Naive thymus-derived CD4-positive, alpha-beta T cell (primary cell): ENCODE measurements at regions of chr6 and their contacts with region 1.

Region 1: GRCh38 chr6:63598049-63599036 is 26.1 kb downstream of the LOC128125822 start:
- DNase-seq: peak; percentile 39 to 80 (median 74)
- ATAC-seq: peak; percentile 99
- H3K4me3 ChIP-seq: peak overlapping the region; percentile 53
- H3K4me3 Mint-ChIP-seq: peak overlapping the region; percentile 73 to 93 (median 88)
- H3K27ac ChIP-seq: no peak overlapping the region
- H3K27ac Mint-ChIP-seq: peak overlapping the region in 5 of 9 donors; percentile 3 to 73 (median 52)
- H3K4me1 ChIP-seq: peaks cover 0 to 4% of the 10 kb centered on the region in 2 donors
- H3K4me1 Mint-ChIP-seq: peaks cover 7 to 20% (median 18%) of the 10 kb centered on the region in 7 donors
- H3K27me3 ChIP-seq: no peaks in the 10 kb centered on the region
- H3K27me3 Mint-ChIP-seq: peaks cover 0 to 22% (median 5%) of the 10 kb centered on the region in 5 donors

Region 2: DNA sequence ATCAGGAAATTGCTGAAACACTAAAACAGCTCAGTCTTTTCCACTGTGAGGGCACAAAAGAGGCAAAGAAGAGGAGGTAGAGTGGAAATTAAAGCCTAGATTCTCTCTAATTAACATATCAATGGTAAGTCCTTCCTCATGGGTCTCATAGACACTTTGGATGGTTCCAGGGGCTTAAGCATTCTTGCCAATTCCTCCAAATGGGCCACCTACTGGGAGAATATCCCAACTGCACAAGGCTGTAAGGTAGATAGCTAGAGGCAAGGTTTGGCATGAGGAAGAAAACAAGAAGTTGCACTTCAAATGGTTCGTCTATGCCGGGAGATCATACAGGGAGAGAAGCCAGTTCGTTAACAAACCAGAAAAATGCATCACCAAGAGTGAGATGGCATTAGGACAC is 1204.7 kb before region 1 on chr6:
- CTCF ChIA-PET with region 1: no interaction called
- POLR2A ChIA-PET with region 1: no interaction called
- intact Hi-C with region 1: no loop called
- DNase-seq: no peak
- ATAC-seq: no peak
- H3K4me3 ChIP-seq: no peak overlapping the region
- H3K4me3 Mint-ChIP-seq: no peak overlapping the region
- H3K27ac ChIP-seq: no peak overlapping the region
- H3K27ac Mint-ChIP-seq: no peak overlapping the region
- H3K4me1 ChIP-seq: no peaks in the 10 kb centered on the region
- H3K4me1 Mint-ChIP-seq: no peaks in the 10 kb centered on the region
- H3K27me3 ChIP-seq: no peaks in the 10 kb centered on the region
- H3K27me3 Mint-ChIP-seq: no peaks in the 10 kb centered on the region

Region 3: DNA sequence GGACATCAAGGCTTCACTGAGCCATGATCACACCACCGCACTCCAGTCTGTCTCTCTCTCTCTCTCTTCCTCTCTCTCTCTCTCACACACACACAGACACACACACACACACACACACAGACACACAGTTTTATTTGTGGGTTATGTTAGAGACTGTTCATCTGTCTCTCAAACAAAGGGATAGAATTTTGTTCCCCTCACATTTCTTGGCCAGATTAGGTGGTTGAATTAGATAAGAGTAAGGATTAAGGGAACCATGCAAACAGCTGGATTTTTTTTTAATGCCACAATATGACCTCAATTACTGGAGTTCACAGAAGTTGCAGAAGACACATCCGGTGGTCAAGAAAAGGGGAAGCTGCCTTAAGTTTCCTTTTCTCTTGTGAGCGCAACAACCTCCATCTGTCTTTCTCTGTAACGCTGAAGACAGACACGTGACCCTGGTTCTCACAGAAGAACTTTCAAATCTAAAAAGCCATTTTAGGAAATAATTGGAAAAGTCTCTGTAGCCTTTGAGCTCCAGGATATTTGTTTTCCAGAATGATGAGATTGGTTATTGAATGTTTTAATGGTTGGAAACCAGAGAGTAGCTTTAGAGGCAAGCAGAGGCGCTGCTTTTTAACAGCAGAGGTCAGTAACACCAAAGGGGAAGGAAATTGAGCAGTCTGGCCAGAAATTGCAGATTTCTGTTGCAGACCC is 245.6 kb before region 1 on chr6:
- CTCF ChIA-PET with region 1: no interaction called
- POLR2A ChIA-PET with region 1: no interaction called
- intact Hi-C with region 1: loop called (anchors 1 kb)
- DNase-seq: no peak
- ATAC-seq: peak; percentile 86
- H3K4me3 ChIP-seq: no peak overlapping the region
- H3K4me3 Mint-ChIP-seq: peak overlapping the region in 2 of 10 donors; percentile 22 to 66
- H3K27ac ChIP-seq: no peak overlapping the region
- H3K27ac Mint-ChIP-seq: peak overlapping the region in 2 of 9 donors; percentile 13 to 48
- H3K4me1 ChIP-seq: no peaks in the 10 kb centered on the region
- H3K4me1 Mint-ChIP-seq: peaks cover 0 to 15% (median 7%) of the 10 kb centered on the region in 7 donors
- H3K27me3 ChIP-seq: no peaks in the 10 kb centered on the region
- H3K27me3 Mint-ChIP-seq: peaks cover 10 to 27% (median 21%) of the 10 kb centered on the region in 5 donors

Region 4: GRCh38 chr6:63389191-63389844 is 209.0 kb before region 1 on chr6:
- CTCF ChIA-PET with region 1: no interaction called
- POLR2A ChIA-PET with region 1: no interaction called
- intact Hi-C with region 1: no loop called
- DNase-seq: no peak
- ATAC-seq: no peak
- H3K4me3 ChIP-seq: no peak overlapping the region
- H3K4me3 Mint-ChIP-seq: no peak overlapping the region
- H3K27ac ChIP-seq: no peak overlapping the region
- H3K27ac Mint-ChIP-seq: no peak overlapping the region
- H3K4me1 ChIP-seq: no peaks in the 10 kb centered on the region
- H3K4me1 Mint-ChIP-seq: no peaks in the 10 kb centered on the region
- H3K27me3 ChIP-seq: no peaks in the 10 kb centered on the region
- H3K27me3 Mint-ChIP-seq: peaks cover 0 to 7% (median 5%) of the 10 kb centered on the region in 5 donors

Region 5: DNA sequence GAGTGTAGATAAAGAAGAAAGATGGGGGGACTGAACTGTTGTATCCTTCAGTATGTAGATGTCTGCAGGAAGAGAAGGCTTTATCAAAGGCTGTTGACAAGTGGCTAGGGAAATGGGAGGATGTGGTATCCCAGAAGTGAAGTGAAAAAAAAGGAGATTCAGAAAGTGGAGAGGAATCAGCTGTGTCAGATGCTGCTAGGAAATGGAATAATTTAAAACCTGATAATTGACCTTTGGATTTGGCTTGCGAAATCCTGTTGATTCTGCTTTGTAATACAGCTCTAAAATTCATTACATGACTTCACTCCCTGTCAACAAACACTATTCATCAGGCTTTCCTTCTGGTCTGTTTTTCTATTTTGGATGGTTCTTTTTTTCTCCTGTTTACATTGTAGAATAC is 78.9 kb after region 1 on chr6:
- CTCF ChIA-PET with region 1: interaction called, 4 read pairs
- POLR2A ChIA-PET with region 1: interaction called, 3 read pairs
- intact Hi-C with region 1: loop called in 1 of 2 experiments (anchors 5 kb)
- DNase-seq: no peak
- ATAC-seq: no peak
- H3K4me3 ChIP-seq: no peak overlapping the region
- H3K4me3 Mint-ChIP-seq: no peak overlapping the region
- H3K27ac ChIP-seq: no peak overlapping the region
- H3K27ac Mint-ChIP-seq: no peak overlapping the region
- H3K4me1 ChIP-seq: peaks cover 5 to 40% of the 10 kb centered on the region in 2 donors
- H3K4me1 Mint-ChIP-seq: peaks cover 15 to 54% (median 38%) of the 10 kb centered on the region in 7 donors
- H3K27me3 ChIP-seq: no peaks in the 10 kb centered on the region
- H3K27me3 Mint-ChIP-seq: no peaks in the 10 kb centered on the region

Region 6: DNA sequence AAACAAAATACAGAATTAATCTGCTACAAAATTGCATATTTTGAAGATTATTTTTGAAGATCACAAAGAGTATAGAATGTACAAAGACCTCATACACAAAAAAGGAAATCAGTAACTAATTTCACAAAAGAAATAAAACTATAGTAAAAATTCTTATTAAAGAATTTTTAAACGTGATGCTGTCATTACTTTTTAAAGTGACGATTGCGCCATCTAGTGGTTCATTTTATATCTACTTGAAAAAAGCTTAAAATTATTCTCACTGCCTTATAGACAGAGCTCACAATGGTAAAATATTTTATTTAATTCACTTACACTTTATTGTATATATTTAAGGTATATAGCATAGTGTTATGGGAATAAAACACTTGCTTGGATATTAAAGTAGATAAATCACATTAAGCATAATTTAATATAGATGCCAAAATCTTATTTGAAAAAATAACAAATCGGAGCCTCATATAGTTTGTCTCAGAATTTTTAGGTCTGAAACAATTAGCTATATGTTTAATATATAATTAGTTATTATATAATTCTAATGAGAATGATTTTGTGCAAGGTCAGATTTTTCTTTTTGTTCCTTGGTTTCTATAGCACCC is 166.1 kb after region 1 on chr6:
- CTCF ChIA-PET with region 1: interaction called, 61 read pairs
- POLR2A ChIA-PET with region 1: interaction called, 4 read pairs
- intact Hi-C with region 1: loop called (anchors 1 kb)
- DNase-seq: peak in 7 of 9 donors; percentile 10 to 52 (median 49)
- ATAC-seq: peak; percentile 50
- H3K4me3 ChIP-seq: no peak overlapping the region
- H3K4me3 Mint-ChIP-seq: no peak overlapping the region
- H3K27ac ChIP-seq: no peak overlapping the region
- H3K27ac Mint-ChIP-seq: no peak overlapping the region
- H3K4me1 ChIP-seq: no peaks in the 10 kb centered on the region
- H3K4me1 Mint-ChIP-seq: no peaks in the 10 kb centered on the region
- H3K27me3 ChIP-seq: no peaks in the 10 kb centered on the region
- H3K27me3 Mint-ChIP-seq: peaks cover 0 to 17% (median 5%) of the 10 kb centered on the region in 5 donors

Region 7: DNA sequence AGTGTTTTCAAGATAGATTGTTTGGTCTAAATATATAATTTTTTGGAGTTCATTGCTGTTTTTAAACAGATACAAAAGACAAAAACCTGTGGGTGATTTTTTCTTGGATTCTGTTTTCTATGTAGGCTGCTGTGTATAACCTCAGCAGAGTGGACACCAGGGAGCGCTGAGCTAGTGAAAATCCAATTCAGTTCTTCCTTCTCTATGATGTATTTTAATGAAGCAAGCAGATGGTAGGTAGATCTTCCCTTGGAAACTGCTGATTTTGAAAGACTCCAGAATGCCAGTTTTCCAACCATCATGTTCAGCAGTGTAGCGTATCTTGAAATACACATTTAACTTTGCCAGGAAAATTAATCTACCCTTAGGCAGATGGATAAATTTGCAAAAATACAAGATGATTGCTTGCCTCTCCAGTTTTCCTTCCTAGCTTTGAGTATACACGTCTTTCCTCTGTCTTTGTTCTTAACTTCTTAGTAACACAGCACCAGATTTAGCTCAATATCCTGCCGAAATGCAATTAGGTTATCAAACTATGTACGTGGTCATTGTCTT is 215.3 kb after region 1 on chr6:
- CTCF ChIA-PET with region 1: no interaction called
- POLR2A ChIA-PET with region 1: no interaction called
- intact Hi-C with region 1: loop called in 1 of 2 experiments (anchors 1 kb)
- DNase-seq: no peak
- ATAC-seq: no peak
- H3K4me3 ChIP-seq: no peak overlapping the region
- H3K4me3 Mint-ChIP-seq: no peak overlapping the region
- H3K27ac ChIP-seq: no peak overlapping the region
- H3K27ac Mint-ChIP-seq: no peak overlapping the region
- H3K4me1 ChIP-seq: no peaks in the 10 kb centered on the region
- H3K4me1 Mint-ChIP-seq: no peaks in the 10 kb centered on the region
- H3K27me3 ChIP-seq: no peaks in the 10 kb centered on the region
- H3K27me3 Mint-ChIP-seq: peaks cover 0 to 16% (median 5%) of the 10 kb centered on the region in 5 donors